H1 (cell line): ENCODE measurements at regions of chr17 and their contacts with region 1.

Region 1: GRCh38 chr17:28675980-28676379 is 14.0 kb downstream of the SUPT6H start:
- DNase-seq: no peak
- H3K4me3 ChIP-seq: no peak overlapping the region
- H3K27ac ChIP-seq: no peak overlapping the region
- H3K4me1 ChIP-seq: no peaks in the 10 kb centered on the region
- H3K27me3 ChIP-seq: no peaks in the 10 kb centered on the region
- CTCF ChIP-seq: peak; percentile 34 to 38 (median 35)
- EP300 ChIP-seq: no peak
- POLR2A ChIP-seq: no peak
- RAD21 ChIP-seq: peak; percentile 21 to 43; a peak in 3 of 4 replicates

Region 2: GRCh38 chr17:28661635-28662537 is 14.1 kb before region 1 on chr17 and contains the starts of genes SDF2 and SUPT6H:
- CTCF ChIA-PET with region 1: interaction called, 7 read pairs
- POLR2A ChIA-PET with region 1: interaction called, 20 read pairs
- DNase-seq: peak in 1 of 2 experiments; percentile 98
- H3K4me3 ChIP-seq: peak within 1 kb of the TSS; percentile 85 to 99 (median 96)
- H3K27ac ChIP-seq: peak within 1 kb of the TSS; percentile 92
- H3K4me1 ChIP-seq: peaks cover 0 to 2% (median 0%) of the 10 kb centered on the region in 4 experiments; a peak in 3 of 7 replicates
- H3K27me3 ChIP-seq: no peaks in the 10 kb centered on the region
- CTCF ChIP-seq: no peak
- EP300 ChIP-seq: no peak
- POLR2A ChIP-seq: peak; percentile 75 to 76; a peak in 2 of 3 replicates
- RAD21 ChIP-seq: no peak
- total RNA-seq, gene SDF2: 43.6 and 44.8 TPM in 2 replicates
- total RNA-seq, gene SUPT6H: 59.9 and 62.4 TPM in 2 replicates

Region 3: GRCh38 chr17:28693869-28694268 is 17.9 kb after region 1 on chr17:
- CTCF ChIA-PET with region 1: interaction called, 4 read pairs
- POLR2A ChIA-PET with region 1: interaction called, 35 read pairs
- DNase-seq: no peak
- H3K4me3 ChIP-seq: no peak overlapping the region
- H3K27ac ChIP-seq: no peak overlapping the region
- H3K4me1 ChIP-seq: no peaks in the 10 kb centered on the region
- H3K27me3 ChIP-seq: no peaks in the 10 kb centered on the region
- CTCF ChIP-seq: no peak
- EP300 ChIP-seq: no peak
- POLR2A ChIP-seq: no peak
- RAD21 ChIP-seq: no peak